ENCODE measurements at regions of chr6 and their contacts with region 1.

Region 1: GRCh38 chr6:135002229-135002844 is 52.3 kb downstream of the HBS1L start:
- DNase-seq: peak in 2 of 9 experiments; percentile 26 to 42
- ATAC-seq: peak; percentile 36
- H3K4me3 ChIP-seq: no peak overlapping the region
- H3K4me3 Mint-ChIP-seq: no peak overlapping the region
- H3K27ac ChIP-seq: no peak overlapping the region
- H3K27ac Mint-ChIP-seq: no peak overlapping the region
- H3K4me1 ChIP-seq: peaks cover 14% of the 10 kb centered on the region
- H3K4me1 Mint-ChIP-seq: peaks cover 18% of the 10 kb centered on the region
- H3K27me3 ChIP-seq: no peaks in the 10 kb centered on the region
- H3K27me3 Mint-ChIP-seq: no peaks in the 10 kb centered on the region
- CTCF ChIP-seq: peak; percentile 71

Region 2: DNA sequence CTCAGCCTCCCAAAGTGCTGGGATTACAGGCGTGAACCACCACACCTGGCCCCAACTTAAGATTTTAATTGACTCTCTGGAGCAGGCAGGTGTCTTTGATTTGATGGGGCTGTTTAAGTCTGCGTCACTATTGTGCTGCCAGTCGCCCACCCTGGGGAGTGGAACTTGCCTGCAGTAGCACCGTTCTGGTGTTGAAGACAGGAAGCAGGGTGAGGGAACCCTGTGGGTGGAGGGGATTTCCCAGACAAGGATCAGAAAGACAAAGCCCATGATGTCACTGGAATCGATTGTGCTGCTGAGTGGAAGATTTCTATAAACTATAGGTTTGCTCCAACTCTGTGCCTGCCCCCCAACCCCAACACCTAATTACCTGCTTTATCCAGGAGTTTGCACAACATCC is 63.4 kb before region 1 on chr6:
- CTCF ChIA-PET with region 1: no interaction called
- POLR2A ChIA-PET with region 1: no interaction called
- intact Hi-C with region 1: no loop called
- DNase-seq: peak in 6 of 9 experiments; percentile 4 to 76 (median 40)
- ATAC-seq: peak; percentile 96
- H3K4me3 ChIP-seq: no peak overlapping the region
- H3K4me3 Mint-ChIP-seq: no peak overlapping the region
- H3K27ac ChIP-seq: no peak overlapping the region
- H3K27ac Mint-ChIP-seq: no peak overlapping the region
- H3K4me1 ChIP-seq: peaks cover 9% of the 10 kb centered on the region
- H3K4me1 Mint-ChIP-seq: peaks cover 10% of the 10 kb centered on the region
- H3K27me3 ChIP-seq: no peaks in the 10 kb centered on the region
- H3K27me3 Mint-ChIP-seq: no peaks in the 10 kb centered on the region
- CTCF ChIP-seq: no peak

Region 3: DNA sequence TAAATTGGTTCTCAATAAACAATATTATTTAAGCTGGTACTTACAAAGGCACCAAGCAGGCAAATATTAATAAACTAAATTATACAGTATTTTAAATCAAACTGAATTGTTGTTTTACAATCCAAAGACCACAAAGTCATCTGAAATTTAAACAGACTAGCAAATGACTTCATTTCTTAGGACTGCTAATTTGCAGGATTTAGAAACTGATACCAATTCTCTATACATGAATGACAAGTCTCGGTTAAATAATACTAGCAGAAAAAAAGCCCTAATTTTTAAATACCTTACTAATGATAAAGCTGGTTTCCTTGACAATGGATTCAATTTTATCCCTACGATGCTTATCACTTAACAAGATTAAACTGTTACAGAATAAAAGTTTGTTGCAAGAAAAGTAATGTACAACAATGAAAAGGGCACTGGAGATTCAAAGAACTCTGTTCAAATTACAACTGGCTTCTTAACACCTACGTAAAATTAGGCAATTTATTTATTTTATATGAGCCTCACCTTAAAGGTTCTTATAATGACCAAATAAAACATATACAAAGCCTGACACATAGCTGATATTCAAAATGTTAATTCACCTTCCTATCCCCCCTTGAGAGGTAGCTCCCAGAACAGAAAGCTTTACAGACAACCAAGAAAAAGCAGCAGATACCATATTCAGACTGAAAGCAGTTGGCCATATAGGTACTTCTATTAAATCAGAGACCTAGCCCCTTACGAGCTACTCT is 19.1 kb after region 1 on chr6:
- CTCF ChIA-PET with region 1: interaction called, 3 read pairs
- POLR2A ChIA-PET with region 1: interaction called, 3 read pairs
- intact Hi-C with region 1: loop called in 1 of 2 experiments (anchors 2 kb)
- DNase-seq: no peak
- ATAC-seq: peak; percentile 23
- H3K4me3 ChIP-seq: peak overlapping the region in 1 of 2 experiments; percentile 5
- H3K4me3 Mint-ChIP-seq: peak overlapping the region; percentile 60
- H3K27ac ChIP-seq: peak overlapping the region in 1 of 2 experiments; percentile 51
- H3K27ac Mint-ChIP-seq: peak overlapping the region; percentile 85
- H3K4me1 ChIP-seq: peaks cover 69% of the 10 kb centered on the region
- H3K4me1 Mint-ChIP-seq: peaks cover 63% of the 10 kb centered on the region
- H3K27me3 ChIP-seq: no peaks in the 10 kb centered on the region
- H3K27me3 Mint-ChIP-seq: no peaks in the 10 kb centered on the region
- CTCF ChIP-seq: no peak

Region 4: DNA sequence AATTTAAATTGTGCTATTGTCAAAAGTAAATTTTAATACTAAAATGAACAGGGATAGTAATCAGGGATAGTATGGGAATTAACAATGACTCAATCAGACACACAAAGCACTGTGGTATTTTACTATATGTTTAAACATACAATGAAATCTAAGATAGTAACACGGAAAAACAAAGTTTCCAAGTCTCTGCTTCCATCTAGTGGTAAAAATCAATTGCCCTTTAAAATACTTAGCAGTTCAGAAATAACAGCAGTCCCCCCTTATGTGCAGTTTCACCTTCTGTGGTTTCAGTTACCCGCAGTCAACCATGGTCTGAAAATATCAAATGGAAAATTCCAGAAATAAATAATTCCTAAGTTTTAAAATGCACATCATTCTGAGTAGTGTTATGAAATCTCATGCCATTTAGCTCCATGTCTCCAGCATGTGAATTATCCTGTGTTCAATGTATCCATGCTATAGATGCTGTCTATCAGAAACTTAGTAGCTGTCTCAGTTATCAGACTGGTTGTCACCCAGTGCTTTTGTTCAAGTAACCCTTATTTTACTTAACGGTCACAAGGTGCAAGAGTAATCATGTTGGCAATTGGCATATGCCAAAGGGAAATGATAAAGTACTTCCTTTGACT is 436.7 kb after region 1 on chr6:
- CTCF ChIA-PET with region 1: no interaction called
- POLR2A ChIA-PET with region 1: no interaction called
- intact Hi-C with region 1: loop called in 1 of 2 experiments (anchors 10 kb)
- DNase-seq: peak in 2 of 9 experiments; percentile 36 to 53
- ATAC-seq: peak; percentile 42
- H3K4me3 ChIP-seq: no peak overlapping the region
- H3K4me3 Mint-ChIP-seq: no peak overlapping the region
- H3K27ac ChIP-seq: no peak overlapping the region
- H3K27ac Mint-ChIP-seq: no peak overlapping the region
- H3K4me1 ChIP-seq: peaks cover 5% of the 10 kb centered on the region
- H3K4me1 Mint-ChIP-seq: peaks cover 18% of the 10 kb centered on the region
- H3K27me3 ChIP-seq: no peaks in the 10 kb centered on the region
- H3K27me3 Mint-ChIP-seq: no peaks in the 10 kb centered on the region
- CTCF ChIP-seq: peak; percentile 47